ENCODE measurements at regions of chr1 and their contacts with region 1.

Region 1: DNA sequence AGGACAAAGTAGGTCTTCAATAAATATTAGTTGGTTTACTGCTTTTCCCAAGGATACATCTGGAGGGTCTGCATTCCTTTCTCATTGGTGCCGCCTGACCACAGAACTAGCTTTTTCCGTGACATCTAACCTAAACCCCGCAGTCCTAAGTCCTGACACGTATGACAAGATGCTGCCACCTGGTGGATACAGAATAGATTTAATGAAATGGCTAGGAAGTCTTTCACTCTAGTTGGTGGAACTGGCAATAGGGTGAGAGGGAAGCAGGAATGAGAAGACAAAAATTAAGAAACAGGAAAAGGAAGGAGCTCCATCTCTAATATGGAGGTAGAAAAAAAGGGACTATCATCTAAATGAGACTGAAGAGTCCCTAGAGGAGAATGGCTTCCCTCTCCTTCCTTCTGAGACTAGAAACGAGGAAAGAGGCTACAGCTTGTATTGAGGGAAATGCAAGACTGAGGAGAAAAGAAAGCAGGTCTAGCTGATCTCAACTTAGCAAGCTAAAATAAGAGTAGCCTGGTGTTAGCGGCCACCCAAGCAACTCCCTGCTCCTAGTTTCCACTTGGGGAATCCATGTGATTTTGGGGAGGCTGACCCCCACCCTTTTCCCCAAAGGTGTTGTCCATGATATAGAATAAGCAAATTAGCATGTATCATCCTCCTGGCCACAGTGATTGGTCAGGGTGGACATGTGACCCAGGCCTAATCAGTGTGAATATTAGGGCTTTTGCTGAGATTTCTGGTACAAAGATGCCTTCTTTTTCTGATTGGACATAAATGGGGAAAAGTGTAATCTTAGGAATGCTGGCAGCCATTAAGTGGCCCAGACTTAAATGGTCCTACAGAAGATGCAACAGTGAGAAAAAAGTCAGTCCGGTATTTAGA is 5.9 kb downstream of the RFX5 start:
- DNase-seq: peak in 1 of 3 donors; percentile 65
- ATAC-seq: peak; percentile 93
- H3K4me3 ChIP-seq: no peak overlapping the region
- H3K4me1 ChIP-seq: peaks cover under 1% of the 10 kb centered on the region
- CTCF ChIP-seq: peak; percentile 41

Region 2: GRCh38 chr1:151282883-151283747 is 58.0 kb before region 1 on chr1:
- intact Hi-C with region 1: no loop called
- DNase-seq: peak; percentile 48 to 73 (median 60)
- ATAC-seq: peak; percentile 2
- H3K4me3 ChIP-seq: peak overlapping the region; percentile 56
- H3K4me1 ChIP-seq: peaks cover 5% of the 10 kb centered on the region
- CTCF ChIP-seq: no peak

Region 3: GRCh38 chr1:151294742-151295462 is 46.2 kb before region 1 on chr1:
- intact Hi-C with region 1: loop called in 1 of 2 experiments (anchors 5 kb)
- DNase-seq: no peak
- ATAC-seq: no peak
- H3K4me3 ChIP-seq: no peak overlapping the region
- H3K4me1 ChIP-seq: no peaks in the 10 kb centered on the region
- CTCF ChIP-seq: no peak

Region 4: DNA sequence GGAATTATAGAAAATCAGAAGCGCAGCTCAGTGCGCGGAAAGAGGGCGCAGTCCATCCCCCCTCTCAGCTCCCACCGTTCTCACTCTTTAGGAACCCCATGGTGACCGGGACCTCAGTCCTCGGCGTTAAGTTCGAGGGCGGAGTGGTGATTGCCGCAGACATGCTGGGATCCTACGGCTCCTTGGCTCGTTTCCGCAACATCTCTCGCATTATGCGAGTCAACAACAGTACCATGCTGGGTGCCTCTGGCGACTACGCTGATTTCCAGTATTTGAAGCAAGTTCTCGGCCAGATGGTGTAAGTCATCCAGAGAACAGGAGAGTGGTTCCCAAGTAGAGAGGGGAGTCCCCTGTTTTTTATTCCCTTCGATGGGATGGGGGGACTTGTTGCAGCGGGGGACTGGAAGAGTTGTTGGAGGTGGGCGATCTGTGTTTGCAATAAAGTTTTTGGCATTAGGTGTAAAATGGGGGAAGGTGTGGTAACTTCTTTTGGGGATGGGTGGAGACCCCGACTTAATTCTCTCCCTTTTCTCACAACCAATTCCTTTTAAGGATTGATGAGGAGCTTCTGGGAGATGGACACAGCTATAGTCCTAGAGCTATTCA is 58.9 kb after region 1 on chr1:
- intact Hi-C with region 1: no loop called
- DNase-seq: peak in 1 of 3 donors; percentile 29
- ATAC-seq: peak; percentile 51
- H3K4me3 ChIP-seq: peak overlapping the region; percentile 86
- H3K4me1 ChIP-seq: peaks cover 20% of the 10 kb centered on the region
- CTCF ChIP-seq: no peak

Region 5: DNA sequence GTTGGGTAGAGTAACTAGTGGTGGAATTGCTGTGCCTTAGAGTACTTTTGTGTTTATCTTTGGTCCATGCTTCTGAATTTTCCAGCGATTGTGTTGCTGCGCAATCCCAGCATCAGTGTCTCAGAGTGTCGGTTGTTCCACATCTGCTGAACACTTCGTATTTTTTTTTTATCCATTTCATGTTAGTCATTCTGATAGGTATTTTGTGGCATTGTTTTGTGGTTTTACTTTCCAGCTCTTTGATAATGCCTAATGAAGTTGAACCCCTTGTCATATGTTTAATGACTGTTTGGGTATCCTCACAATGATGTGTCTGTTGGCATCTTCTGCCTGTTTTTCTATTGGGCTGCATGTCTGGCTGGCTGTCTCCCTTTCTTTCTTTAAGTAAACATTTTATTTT is 212.5 kb after region 1 on chr1:
- intact Hi-C with region 1: no loop called
- DNase-seq: no peak
- ATAC-seq: no peak
- H3K4me3 ChIP-seq: no peak overlapping the region
- H3K4me1 ChIP-seq: peaks cover 4% of the 10 kb centered on the region
- CTCF ChIP-seq: no peak